Activated T-helper 2 cell treated with anti-CD3 and anti-CD28 coated beads, Interferon-gamma antibody, Interleukin-2, Interleukin-4, amounts not matched to agents 10 μg/mL and 5 μg/mL and 100 μg/mL, durations not matched to agents 14 hours and 24 hours and 36 hours (primary cell): ENCODE measurements at regions of chr9 and their contacts with region 1.

Region 1: GRCh38 chr9:137129456-137130175 is 9.3 kb upstream of the GRIN1 start:
- DNase-seq: peak; percentile 90
- H3K4me3 Mint-ChIP-seq: peak overlapping the region; percentile 88
- H3K27ac Mint-ChIP-seq: peak overlapping the region; percentile 38
- H3K4me1 Mint-ChIP-seq: peaks cover 24% of the 10 kb centered on the region
- H3K27me3 Mint-ChIP-seq: peaks cover 3% of the 10 kb centered on the region

Region 2: DNA sequence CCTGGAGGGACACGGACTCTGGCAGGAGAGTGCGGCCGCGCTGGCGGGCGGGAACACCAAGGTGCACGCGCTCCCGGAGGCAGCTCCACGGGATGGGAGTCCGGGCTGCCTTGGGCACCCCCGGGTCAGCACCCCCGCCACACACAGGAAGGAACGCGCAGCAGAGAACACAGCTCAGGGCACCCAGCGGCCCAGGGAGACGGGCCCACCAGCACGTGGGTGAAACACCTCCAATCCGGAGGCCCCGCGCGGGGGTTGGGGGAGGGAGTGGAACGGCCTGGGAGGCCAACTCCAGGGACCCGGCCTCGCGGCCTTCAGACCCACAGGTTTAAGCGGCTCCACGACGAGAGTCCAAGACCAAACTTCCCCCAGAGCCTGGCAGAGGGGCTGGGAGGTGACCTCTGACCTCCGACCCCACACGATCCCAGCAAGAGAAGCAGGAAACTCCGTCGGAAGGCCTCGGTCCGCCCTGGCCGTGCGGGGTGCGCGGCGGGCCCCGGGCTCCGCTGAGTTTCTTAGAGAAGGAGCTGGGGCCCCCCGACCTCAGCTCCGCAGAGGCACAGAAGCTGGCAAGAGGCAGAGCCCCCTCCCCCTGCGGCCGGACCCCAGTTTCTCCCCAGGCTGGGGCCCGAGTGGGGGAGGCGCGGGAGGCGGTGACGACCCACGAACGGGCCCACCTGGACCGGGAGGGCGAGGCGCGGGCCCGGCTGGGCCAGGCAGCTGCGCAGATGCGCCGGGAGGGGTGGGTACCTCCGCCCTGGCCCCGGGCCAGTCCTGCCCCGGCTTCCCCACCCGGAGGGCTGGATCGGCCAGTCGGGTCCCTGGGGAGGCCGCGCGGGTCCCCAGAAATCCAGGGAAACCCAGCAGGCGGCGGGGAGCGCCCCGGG is 1035.4 kb before region 1 on chr9:
- intact Hi-C with region 1: loop called (anchors 10 kb)
- DNase-seq: no peak
- H3K4me3 Mint-ChIP-seq: peak overlapping the region; percentile 66
- H3K27ac Mint-ChIP-seq: no peak overlapping the region
- H3K4me1 Mint-ChIP-seq: peaks cover 4% of the 10 kb centered on the region
- H3K27me3 Mint-ChIP-seq: peaks cover 18% of the 10 kb centered on the region

Region 3: GRCh38 chr9:137086531-137087408 is 42.8 kb before region 1 on chr9 and contains the start of gene MAN1B1:
- intact Hi-C with region 1: loop called (anchors 2 kb)
- DNase-seq: peak; percentile 100
- H3K4me3 Mint-ChIP-seq: peak within 1 kb of the TSS; percentile 92
- H3K27ac Mint-ChIP-seq: peak within 1 kb of the TSS; percentile 88
- H3K4me1 Mint-ChIP-seq: peaks cover 34% of the 10 kb centered on the region
- H3K27me3 Mint-ChIP-seq: no peaks in the 10 kb centered on the region
- total RNA-seq, gene MAN1B1: 47.5 and 52.2 TPM in 2 replicates

Region 4: GRCh38 chr9:137176302-137177182 is 46.9 kb after region 1 on chr9:
- intact Hi-C with region 1: loop called (anchors 10 kb)
- DNase-seq: no peak
- H3K4me3 Mint-ChIP-seq: no peak overlapping the region
- H3K27ac Mint-ChIP-seq: no peak overlapping the region
- H3K4me1 Mint-ChIP-seq: no peaks in the 10 kb centered on the region
- H3K27me3 Mint-ChIP-seq: peaks cover 5% of the 10 kb centered on the region

Region 5: GRCh38 chr9:137200311-137201204 is 70.9 kb after region 1 on chr9 and contains the start of gene TPRN:
- intact Hi-C with region 1: loop called (anchors 5 kb)
- DNase-seq: peak; percentile 99
- H3K4me3 Mint-ChIP-seq: peak within 1 kb of the TSS; percentile 83
- H3K27ac Mint-ChIP-seq: peak within 1 kb of the TSS; percentile 69
- H3K4me1 Mint-ChIP-seq: peaks cover 20% of the 10 kb centered on the region
- H3K27me3 Mint-ChIP-seq: no peaks in the 10 kb centered on the region
- total RNA-seq, gene TPRN: 16.4 and 18.2 TPM in 2 replicates